Common myeloid progenitor, CD34-positive (primary cell): ENCODE measurements at regions of chr9 and their contacts with region 1.

Region 1: DNA sequence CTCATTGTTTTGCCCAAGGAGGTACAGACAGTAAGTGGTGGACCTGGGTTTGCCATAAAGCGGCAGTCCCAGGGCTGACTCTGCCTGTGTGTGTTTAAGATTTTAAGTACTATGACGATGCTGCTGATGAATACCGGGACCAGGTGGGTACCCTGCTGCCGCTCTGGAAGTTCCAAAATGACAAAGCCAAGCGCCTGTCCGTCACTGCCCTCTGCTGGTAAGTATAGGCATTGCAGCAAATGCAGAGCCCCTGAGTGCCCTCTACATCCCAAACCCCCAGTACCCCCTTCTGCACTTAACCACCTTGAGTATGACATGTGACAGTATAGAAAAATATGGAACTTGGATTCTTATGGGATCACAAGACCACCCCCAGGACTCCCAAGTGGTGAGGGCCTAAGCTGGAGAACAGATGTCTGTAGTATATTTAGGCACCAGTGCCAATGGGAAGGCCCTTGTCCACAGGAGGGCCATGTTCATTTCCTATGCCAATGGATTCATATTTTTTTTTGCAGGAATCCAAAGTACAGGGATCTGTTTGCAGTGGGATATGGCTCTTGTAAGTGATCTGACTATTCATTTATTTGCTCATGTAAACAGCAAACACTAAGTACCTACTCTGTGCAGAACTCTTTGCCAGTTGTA is 22.0 kb downstream of the ENHO start:
- DNase-seq: peak; percentile 42 to 71 (median 58)
- H3K4me3 ChIP-seq: no peak overlapping the region
- H3K27ac ChIP-seq: no peak overlapping the region
- H3K4me1 ChIP-seq: no peaks in the 10 kb centered on the region
- H3K27me3 ChIP-seq: peaks cover 0 to 12% (median 0%) of the 10 kb centered on the region in 5 experiments

Region 2: DNA sequence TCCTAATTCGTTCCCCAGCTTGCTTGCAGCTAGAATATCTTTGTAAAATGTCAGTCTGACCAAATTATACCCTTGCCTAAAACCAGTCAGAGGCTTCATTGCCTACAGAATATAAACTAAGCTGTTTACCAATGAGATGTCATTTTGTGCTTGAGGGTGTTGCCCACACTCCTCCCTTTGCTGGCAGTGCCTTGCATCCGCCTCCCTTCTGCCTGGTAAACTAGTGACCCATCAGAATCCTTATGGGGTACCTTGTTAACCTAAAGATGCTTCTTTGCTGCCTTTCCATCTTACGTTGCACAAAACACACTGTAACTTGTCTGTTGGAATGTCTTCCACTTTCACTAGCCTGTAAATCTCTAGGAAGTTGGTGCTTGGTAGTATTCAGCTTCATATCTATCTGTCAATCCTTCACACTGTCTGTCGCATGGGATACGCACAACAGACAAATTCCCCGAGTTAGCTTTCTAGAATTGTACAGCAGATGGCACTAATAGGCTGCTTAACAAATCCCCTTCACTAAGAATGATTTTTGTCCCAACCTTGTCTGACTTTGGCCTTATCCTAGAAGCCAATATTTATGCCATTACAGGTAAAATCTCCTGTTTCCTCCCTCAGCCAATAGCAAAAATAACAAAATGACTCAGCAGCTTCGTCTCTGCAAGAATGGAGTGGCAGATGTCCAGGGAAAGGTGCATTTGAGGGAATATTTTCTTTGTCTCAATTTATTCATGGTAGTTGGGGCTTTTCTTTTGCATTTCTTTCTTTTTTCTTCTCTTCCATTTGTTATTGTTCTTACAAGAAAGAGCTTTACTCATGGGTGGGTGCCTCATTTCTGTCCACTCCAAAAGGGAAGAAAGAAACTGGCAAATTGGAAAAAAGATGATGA is 168.4 kb before region 1 on chr9:
- CTCF ChIA-PET with region 1: interaction called, 13 read pairs
- POLR2A ChIA-PET with region 1: no interaction called
- DNase-seq: peak; percentile 60 to 74 (median 66)
- H3K4me3 ChIP-seq: no peak overlapping the region
- H3K27ac ChIP-seq: no peak overlapping the region
- H3K4me1 ChIP-seq: peaks cover 5 to 29% (median 18%) of the 10 kb centered on the region in 4 experiments
- H3K27me3 ChIP-seq: no peaks in the 10 kb centered on the region

Region 3: GRCh38 chr9:34430843-34431437 is 69.8 kb before region 1 on chr9:
- CTCF ChIA-PET with region 1: interaction called, 60 read pairs
- POLR2A ChIA-PET with region 1: no interaction called
- DNase-seq: peak; percentile 59 to 83 (median 81)
- H3K4me3 ChIP-seq: no peak overlapping the region
- H3K27ac ChIP-seq: no peak overlapping the region
- H3K4me1 ChIP-seq: no peaks in the 10 kb centered on the region
- H3K27me3 ChIP-seq: no peaks in the 10 kb centered on the region

Region 4: DNA sequence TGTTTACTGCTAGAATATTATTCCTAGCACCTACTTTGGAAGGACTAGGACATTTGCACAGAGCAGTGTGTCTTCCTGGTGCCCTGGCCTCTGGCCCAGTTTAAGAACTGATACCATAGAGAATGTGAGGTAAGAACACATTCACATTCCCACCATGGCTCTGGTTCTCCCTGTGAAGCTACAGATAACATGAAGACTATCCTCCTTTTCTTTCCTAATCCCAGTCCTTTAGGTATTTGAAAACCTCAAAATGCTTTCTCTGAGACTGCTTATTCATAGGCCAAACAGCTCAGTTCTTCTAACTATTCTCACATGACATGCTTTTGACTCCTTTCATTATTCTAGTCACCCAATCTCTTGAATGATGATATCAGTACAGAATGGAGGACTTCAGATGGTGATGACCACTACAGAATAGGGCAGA is 54.3 kb before region 1 on chr9:
- CTCF ChIA-PET with region 1: interaction called, 60 read pairs
- POLR2A ChIA-PET with region 1: no interaction called
- DNase-seq: no peak
- H3K4me3 ChIP-seq: no peak overlapping the region
- H3K27ac ChIP-seq: no peak overlapping the region
- H3K4me1 ChIP-seq: peaks cover 0 to 19% (median 6%) of the 10 kb centered on the region in 4 experiments
- H3K27me3 ChIP-seq: no peaks in the 10 kb centered on the region

Region 5: GRCh38 chr9:34513567-34514214 is 12.9 kb after region 1 on chr9:
- CTCF ChIA-PET with region 1: interaction called, 21 read pairs
- POLR2A ChIA-PET with region 1: no interaction called
- DNase-seq: no peak
- H3K4me3 ChIP-seq: no peak overlapping the region
- H3K27ac ChIP-seq: no peak overlapping the region
- H3K4me1 ChIP-seq: peaks cover 0 to 14% (median 3%) of the 10 kb centered on the region in 4 experiments
- H3K27me3 ChIP-seq: peaks cover 0 to 8% (median 0%) of the 10 kb centered on the region in 5 experiments

Region 6: GRCh38 chr9:34686231-34686630 is 185.5 kb after region 1 on chr9:
- CTCF ChIA-PET with region 1: no interaction called
- POLR2A ChIA-PET with region 1: no interaction called
- DNase-seq: no peak
- H3K4me3 ChIP-seq: no peak overlapping the region
- H3K27ac ChIP-seq: no peak overlapping the region
- H3K4me1 ChIP-seq: peaks cover under 1 to 20% (median 10%) of the 10 kb centered on the region in 4 experiments
- H3K27me3 ChIP-seq: peaks cover 0 to 2% (median 0%) of the 10 kb centered on the region in 5 experiments